Activated CD4-positive, alpha-beta memory T cell treated with anti-CD3 and anti-CD28 coated beads, Interleukin-2, amount 10 ng/mL, durations not matched to agents 7 days and 5 days (primary cell): ENCODE measurements at regions of chr5 and their contacts with region 1.

Region 1: DNA sequence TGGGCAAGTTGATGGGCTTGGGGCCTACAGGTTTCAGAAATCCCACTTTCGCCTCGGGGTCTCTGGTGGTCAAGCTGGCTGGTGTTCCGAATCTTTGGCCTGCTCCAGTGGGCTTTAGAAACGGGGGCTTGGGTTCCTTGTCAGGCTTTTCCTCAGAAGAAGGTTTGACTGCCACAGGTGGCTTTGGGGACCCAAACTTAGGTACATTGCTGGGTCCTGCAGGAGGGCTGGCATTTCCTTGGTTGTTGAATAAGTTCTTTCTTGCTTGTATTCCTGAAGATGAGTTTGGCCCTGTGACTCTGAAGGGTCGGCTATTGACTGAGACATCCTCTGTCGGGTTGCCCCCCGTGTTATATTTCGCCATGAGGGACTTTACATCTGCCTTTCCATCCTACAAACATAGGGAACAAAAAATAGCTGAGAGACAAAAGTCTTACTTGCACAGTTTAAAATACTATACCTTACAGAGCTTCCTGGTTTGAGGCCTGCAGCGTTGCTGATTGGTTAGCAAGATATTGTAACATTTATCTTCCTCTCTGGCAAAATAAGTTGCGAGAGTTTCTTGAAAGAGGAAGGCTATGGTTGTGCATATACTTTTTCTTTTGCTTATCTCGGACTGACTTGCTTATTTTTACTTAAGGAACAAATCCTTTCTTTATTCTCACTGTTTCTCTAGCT is 16.6 kb downstream of the FYB1 start:
- DNase-seq: peak; percentile 62
- H3K4me3 Mint-ChIP-seq: peak overlapping the region; percentile 96
- H3K27ac Mint-ChIP-seq: peak overlapping the region; percentile 97
- H3K4me1 Mint-ChIP-seq: peaks cover 40% of the 10 kb centered on the region
- H3K27me3 Mint-ChIP-seq: no peaks in the 10 kb centered on the region

Region 2: GRCh38 chr5:39158127-39158593 is 44.6 kb before region 1 on chr5:
- CTCF ChIA-PET with region 1: no interaction called
- POLR2A ChIA-PET with region 1: interaction called, 21 read pairs
- DNase-seq: no peak
- H3K4me3 Mint-ChIP-seq: peak overlapping the region; percentile 37
- H3K27ac Mint-ChIP-seq: peak overlapping the region; percentile 38
- H3K4me1 Mint-ChIP-seq: peaks cover 81% of the 10 kb centered on the region
- H3K27me3 Mint-ChIP-seq: no peaks in the 10 kb centered on the region

Region 3: GRCh38 chr5:39164529-39165402 is 38.0 kb before region 1 on chr5:
- CTCF ChIA-PET with region 1: no interaction called
- POLR2A ChIA-PET with region 1: interaction called, 21 read pairs
- DNase-seq: no peak
- H3K4me3 Mint-ChIP-seq: peak overlapping the region; percentile 60
- H3K27ac Mint-ChIP-seq: peak overlapping the region; percentile 79
- H3K4me1 Mint-ChIP-seq: peaks cover 85% of the 10 kb centered on the region
- H3K27me3 Mint-ChIP-seq: no peaks in the 10 kb centered on the region